H1 (cell line): ENCODE measurements at regions of chr6 and their contacts with region 1.

Region 1: GRCh38 chr6:125899726-125900182 is 56.8 kb upstream of the HINT3 start:
- DNase-seq: no peak
- H3K4me3 ChIP-seq: no peak overlapping the region
- H3K27ac ChIP-seq: no peak overlapping the region
- H3K4me1 ChIP-seq: no peaks in the 10 kb centered on the region; a peak in 1 of 7 replicates
- H3K27me3 ChIP-seq: no peaks in the 10 kb centered on the region
- CTCF ChIP-seq: peak in 1 of 3 experiments; percentile 30; a peak in 1 of 4 replicates
- EP300 ChIP-seq: no peak
- POLR2A ChIP-seq: no peak
- RAD21 ChIP-seq: no peak; a peak in 1 of 4 replicates

Region 2: GRCh38 chr6:125913864-125914351 is 14.2 kb after region 1 on chr6:
- CTCF ChIA-PET with region 1: interaction called, 78 read pairs
- POLR2A ChIA-PET with region 1: no interaction called
- DNase-seq: no peak
- H3K4me3 ChIP-seq: no peak overlapping the region
- H3K27ac ChIP-seq: no peak overlapping the region
- H3K4me1 ChIP-seq: peaks cover 0 to 7% (median 4%) of the 10 kb centered on the region in 4 experiments; a peak in 6 of 7 replicates
- H3K27me3 ChIP-seq: no peaks in the 10 kb centered on the region
- CTCF ChIP-seq: no peak
- EP300 ChIP-seq: no peak
- POLR2A ChIP-seq: no peak
- RAD21 ChIP-seq: no peak

Region 3: DNA sequence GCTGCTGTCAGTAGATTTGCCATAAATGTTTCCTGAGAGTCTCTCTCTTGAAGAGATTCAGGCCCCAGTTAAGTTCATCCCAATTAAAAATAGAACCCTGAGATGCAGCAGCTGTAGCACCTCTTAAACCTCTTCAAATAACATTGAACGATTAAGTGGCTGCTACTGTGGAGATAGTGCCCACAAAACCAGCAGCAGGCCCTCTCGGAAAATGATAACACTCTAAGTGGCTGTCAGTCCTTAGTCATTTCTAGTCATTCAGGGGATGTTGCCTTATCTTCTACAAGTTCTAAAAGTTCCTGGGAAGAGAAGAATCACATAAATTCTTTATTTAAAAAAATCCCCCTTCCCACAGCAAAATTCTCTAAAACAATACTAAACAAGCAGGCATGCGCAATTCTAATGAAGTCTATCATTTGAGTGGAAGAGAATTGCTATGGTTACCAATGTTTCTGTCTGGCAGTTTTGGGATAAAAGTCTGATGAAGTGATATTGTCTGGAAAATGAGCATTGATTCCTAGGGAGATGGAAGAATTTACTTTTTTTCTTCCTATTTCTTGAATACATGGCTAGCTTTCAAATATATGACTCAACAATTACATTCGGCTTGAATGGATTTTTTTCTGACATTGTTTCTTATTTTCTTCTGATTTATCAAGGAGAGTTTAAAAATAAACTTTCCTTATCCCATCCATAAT is 218.5 kb after region 1 on chr6:
- CTCF ChIA-PET with region 1: no interaction called
- POLR2A ChIA-PET with region 1: no interaction called
- DNase-seq: no peak
- H3K4me3 ChIP-seq: no peak overlapping the region
- H3K27ac ChIP-seq: no peak overlapping the region
- H3K4me1 ChIP-seq: no peaks in the 10 kb centered on the region
- H3K27me3 ChIP-seq: no peaks in the 10 kb centered on the region
- CTCF ChIP-seq: no peak
- EP300 ChIP-seq: no peak
- POLR2A ChIP-seq: no peak
- RAD21 ChIP-seq: no peak